ENCODE measurements at regions of chr6 and their contacts with region 1.

Region 1: DNA sequence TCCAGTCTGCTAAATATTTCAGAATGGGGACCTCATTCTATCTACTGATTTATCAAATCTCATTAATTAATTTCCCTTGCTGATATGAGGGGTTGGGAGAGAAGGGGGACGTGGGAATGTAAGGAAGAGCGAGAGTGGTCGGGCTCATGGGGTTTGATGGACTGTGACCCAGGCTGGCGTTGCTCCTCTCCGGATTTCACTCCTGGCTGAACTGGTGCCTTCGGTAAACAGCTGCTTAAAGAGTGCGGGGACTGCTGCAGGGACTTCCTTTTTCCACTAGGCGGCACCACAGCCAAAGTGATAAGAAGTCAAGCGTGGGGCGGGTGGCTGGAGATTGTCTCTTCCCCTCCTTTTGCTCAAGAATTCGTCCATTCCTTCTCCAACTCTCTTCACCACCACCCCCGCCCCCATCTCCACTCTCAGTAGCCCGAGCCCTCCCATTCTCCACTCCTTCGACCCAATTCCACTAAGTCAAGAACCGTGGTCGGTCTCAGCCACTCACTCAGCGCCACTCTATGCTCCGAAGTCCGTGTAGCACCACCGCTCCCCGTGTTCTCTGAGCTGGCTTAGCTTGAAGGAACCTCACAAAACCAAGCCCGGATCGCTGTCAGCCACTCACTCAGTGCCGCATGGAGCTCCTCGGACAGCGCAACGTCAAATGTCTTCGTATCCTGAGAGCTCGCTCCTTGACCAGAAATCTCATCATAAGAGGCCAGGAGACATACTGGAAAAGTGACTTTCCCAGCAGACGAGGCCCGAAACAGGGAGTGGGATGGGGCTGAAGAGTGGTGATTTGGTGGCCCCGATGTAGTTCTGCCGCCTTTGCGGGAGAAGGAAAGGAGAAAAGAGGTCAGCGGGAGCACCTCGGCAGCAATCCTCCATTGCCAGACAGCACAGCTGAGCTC is 9.7 kb downstream of the TRIM31 start:
- DNase-seq: peak; percentile 92
- H3K4me3 ChIP-seq: peak overlapping the region; percentile 35 to 54
- H3K27ac ChIP-seq: peak overlapping the region; percentile 59 to 64
- H3K4me1 ChIP-seq: peaks cover 0 to 38% (median 27%) of the 10 kb centered on the region in 4 donors
- H3K27me3 ChIP-seq: peaks cover 0 to 51% of the 10 kb centered on the region in 2 donors
- CTCF ChIP-seq: peak; percentile 84 to 88

Region 2: GRCh38 chr6:29723262-29723665 is 380.0 kb before region 1 on chr6 and contains the start of gene HLA-F:
- intact Hi-C with region 1: no loop called
- DNase-seq: peak; percentile 94
- H3K4me3 ChIP-seq: peak within 1 kb of the TSS; percentile 64 to 90
- H3K27ac ChIP-seq: peak within 1 kb of the TSS; percentile 86 to 94
- H3K4me1 ChIP-seq: peaks cover 0 to 23% (median 11%) of the 10 kb centered on the region in 4 donors
- H3K27me3 ChIP-seq: no peaks in the 10 kb centered on the region
- CTCF ChIP-seq: no peak

Region 3: DNA sequence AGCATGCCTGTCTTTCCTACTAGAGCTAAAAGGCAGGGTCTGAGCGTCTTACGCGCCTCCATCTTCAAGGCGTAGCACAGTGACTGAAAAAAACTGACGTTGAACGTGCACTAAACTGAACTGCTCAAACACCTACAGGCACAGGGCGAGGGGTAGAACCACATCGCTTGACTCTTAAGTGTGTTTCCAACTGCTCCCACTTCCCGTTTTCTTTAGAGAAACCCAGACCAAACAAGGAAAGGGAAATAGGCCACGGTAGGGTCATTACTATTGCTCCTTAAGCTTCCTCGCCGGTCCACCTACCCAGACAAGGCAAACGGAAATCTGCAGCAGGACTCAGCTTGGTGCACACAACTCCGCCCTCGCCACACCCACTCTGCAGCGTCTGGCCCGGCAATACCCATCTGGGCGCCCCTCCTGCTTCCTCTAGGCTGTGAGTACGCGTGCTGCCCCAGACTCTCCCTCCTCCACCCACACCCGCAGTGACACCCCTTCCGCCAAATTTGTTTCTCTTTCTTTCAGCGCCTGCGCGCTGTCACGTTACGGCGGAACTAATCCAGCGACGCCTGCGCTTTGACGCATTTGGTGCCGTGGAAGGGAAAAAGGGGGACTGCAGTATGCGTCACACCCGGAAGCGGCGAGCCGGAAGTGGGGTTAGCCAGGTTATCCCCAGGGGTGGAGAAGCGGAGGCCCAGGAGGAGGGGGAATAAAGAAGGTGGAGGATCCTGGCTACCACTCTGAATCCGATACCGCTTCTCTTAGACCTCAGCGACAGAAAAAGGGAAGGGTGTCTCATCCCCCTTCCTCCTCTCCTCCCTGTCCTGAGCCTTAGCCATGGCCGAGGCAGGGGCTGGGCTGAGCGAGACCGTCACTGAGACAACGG is 36.4 kb before region 1 on chr6 and contains the start of gene PPP1R11:
- intact Hi-C with region 1: loop called (anchors 5 kb)
- DNase-seq: peak; percentile 99 to 100
- H3K4me3 ChIP-seq: peak within 1 kb of the TSS; percentile 62 to 79
- H3K27ac ChIP-seq: peak within 1 kb of the TSS; percentile 83 to 84
- H3K4me1 ChIP-seq: peaks cover 3 to 41% (median 27%) of the 10 kb centered on the region in 4 donors
- H3K27me3 ChIP-seq: peaks cover 0 to 20% of the 10 kb centered on the region in 2 donors
- CTCF ChIP-seq: peak in 1 of 2 experiments; percentile 5

Region 4: GRCh38 chr6:30136570-30137286 is 33.5 kb after region 1 on chr6:
- intact Hi-C with region 1: loop called (anchors 5 kb)
- DNase-seq: no peak
- H3K4me3 ChIP-seq: no peak overlapping the region
- H3K27ac ChIP-seq: no peak overlapping the region
- H3K4me1 ChIP-seq: no peaks in the 10 kb centered on the region
- H3K27me3 ChIP-seq: peaks cover 0 to 45% of the 10 kb centered on the region in 2 donors
- CTCF ChIP-seq: no peak

Region 5: GRCh38 chr6:30150671-30151395 is 47.6 kb after region 1 on chr6:
- intact Hi-C with region 1: no loop called
- DNase-seq: no peak
- H3K4me3 ChIP-seq: no peak overlapping the region
- H3K27ac ChIP-seq: no peak overlapping the region
- H3K4me1 ChIP-seq: peaks cover 0 to 5% (median 0%) of the 10 kb centered on the region in 4 donors
- H3K27me3 ChIP-seq: peaks cover 0 to 31% of the 10 kb centered on the region in 2 donors
- CTCF ChIP-seq: no peak